Astrocyte of the cerebellum (primary cell): ENCODE measurements at regions of chr1 and their contacts with region 1.

Region 1: GRCh38 chr1:89454845-89455521 is 69.6 kb upstream of the LRRC8B start:
- DNase-seq: peak; percentile 33
- H3K4me3 ChIP-seq: no peak overlapping the region
- CTCF ChIP-seq: peak; percentile 62

Region 2: GRCh38 chr1:88973520-88974137 is 481.4 kb before region 1 on chr1:
- in situ Hi-C with region 1: loop called (anchors 25 kb)
- DNase-seq: peak; percentile 24
- H3K4me3 ChIP-seq: no peak overlapping the region
- CTCF ChIP-seq: peak; percentile 37

Region 3: GRCh38 chr1:89407360-89407759 is 47.6 kb before region 1 on chr1:
- in situ Hi-C with region 1: no loop called
- DNase-seq: no peak
- H3K4me3 ChIP-seq: no peak overlapping the region
- CTCF ChIP-seq: no peak

Region 4: DNA sequence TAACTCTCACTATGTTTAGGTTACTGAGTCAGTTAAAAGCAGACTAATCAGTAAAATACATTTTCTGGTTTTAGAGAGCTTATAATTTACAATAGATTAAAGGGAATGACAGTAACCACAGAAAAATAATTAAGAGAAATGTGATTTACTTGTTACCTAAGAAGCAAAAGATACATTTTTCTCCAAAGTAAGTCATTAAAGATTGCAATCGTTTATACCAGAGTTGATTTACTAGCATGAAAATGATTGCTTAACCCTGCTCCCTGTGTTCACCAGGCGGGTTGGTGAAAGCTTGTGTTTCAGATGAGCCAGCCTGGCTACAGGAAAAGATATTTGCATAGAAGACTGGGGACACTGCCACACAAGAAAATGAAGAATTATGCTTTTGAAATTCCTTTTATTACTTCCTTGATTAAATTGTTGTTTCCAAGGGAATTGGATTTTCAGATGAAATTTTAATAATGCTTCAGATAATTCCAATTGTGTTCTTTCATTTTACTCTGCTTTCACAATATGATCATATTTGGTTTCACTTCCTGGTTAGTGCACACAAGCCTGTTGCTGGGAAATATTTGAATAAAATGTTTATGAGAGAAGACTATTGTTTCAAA is 97.6 kb after region 1 on chr1:
- in situ Hi-C with region 1: no loop called
- DNase-seq: no peak
- H3K4me3 ChIP-seq: no peak overlapping the region
- CTCF ChIP-seq: no peak